ENCODE measurements at regions of chr5 and their contacts with region 1.

Region 1: GRCh38 chr5:55159763-55160492 is at the start of gene GPX8:
- DNase-seq: peak; percentile 88
- H3K4me3 Mint-ChIP-seq: peak within 1 kb of the TSS; percentile 78
- H3K27ac Mint-ChIP-seq: peak within 1 kb of the TSS; percentile 82
- H3K4me1 Mint-ChIP-seq: peaks cover 2% of the 10 kb centered on the region
- H3K27me3 Mint-ChIP-seq: peaks cover 13% of the 10 kb centered on the region
- CTCF ChIP-seq: peak; percentile 66
- total RNA-seq, gene GPX8: 37.2 and 38.8 TPM in 2 replicates

Region 2: GRCh38 chr5:54651482-54652076 is 508.3 kb before region 1 on chr5:
- CTCF ChIA-PET with region 1: no interaction called
- POLR2A ChIA-PET with region 1: no interaction called
- intact Hi-C with region 1: loop called (anchors 10 kb)
- DNase-seq: peak; percentile 96
- H3K4me3 Mint-ChIP-seq: no peak overlapping the region
- H3K27ac Mint-ChIP-seq: peak overlapping the region; percentile 49
- H3K4me1 Mint-ChIP-seq: peaks cover 25% of the 10 kb centered on the region
- H3K27me3 Mint-ChIP-seq: no peaks in the 10 kb centered on the region
- CTCF ChIP-seq: no peak

Region 3: DNA sequence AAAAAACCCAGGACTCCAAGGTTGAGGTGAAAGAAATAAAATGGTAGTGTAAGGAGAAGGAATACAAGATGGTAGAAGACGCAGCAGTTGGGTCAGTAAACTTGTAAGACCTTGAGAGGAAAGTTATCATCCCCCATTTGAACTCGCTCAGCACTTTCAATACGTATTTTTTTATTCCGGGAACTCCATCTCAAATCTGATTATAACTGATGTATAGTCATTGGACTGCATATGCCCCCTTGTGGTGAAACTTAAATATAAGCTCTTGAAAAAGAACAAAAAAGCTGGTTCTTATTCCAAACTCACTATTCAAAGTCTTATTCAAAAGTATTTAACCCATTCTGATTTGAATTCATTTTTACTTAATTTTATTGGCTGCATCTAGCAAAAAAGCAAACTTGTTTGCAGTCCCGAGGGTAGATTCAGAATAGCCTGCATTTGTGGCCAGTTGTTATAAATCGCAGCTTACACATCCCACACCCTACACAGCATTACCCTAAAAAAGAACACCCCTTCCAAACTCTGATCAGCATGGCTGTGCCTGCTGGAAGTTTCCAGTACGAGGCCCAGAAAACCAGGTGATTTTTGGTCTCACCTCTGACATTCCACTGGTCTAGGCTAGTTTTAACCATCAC is 292.5 kb before region 1 on chr5:
- CTCF ChIA-PET with region 1: interaction called, 10 read pairs
- POLR2A ChIA-PET with region 1: no interaction called
- intact Hi-C with region 1: no loop called
- DNase-seq: peak; percentile 57
- H3K4me3 Mint-ChIP-seq: peak overlapping the region; percentile 44
- H3K27ac Mint-ChIP-seq: no peak overlapping the region
- H3K4me1 Mint-ChIP-seq: peaks cover 6% of the 10 kb centered on the region
- H3K27me3 Mint-ChIP-seq: peaks cover 13% of the 10 kb centered on the region
- CTCF ChIP-seq: peak; percentile 49

Region 4: DNA sequence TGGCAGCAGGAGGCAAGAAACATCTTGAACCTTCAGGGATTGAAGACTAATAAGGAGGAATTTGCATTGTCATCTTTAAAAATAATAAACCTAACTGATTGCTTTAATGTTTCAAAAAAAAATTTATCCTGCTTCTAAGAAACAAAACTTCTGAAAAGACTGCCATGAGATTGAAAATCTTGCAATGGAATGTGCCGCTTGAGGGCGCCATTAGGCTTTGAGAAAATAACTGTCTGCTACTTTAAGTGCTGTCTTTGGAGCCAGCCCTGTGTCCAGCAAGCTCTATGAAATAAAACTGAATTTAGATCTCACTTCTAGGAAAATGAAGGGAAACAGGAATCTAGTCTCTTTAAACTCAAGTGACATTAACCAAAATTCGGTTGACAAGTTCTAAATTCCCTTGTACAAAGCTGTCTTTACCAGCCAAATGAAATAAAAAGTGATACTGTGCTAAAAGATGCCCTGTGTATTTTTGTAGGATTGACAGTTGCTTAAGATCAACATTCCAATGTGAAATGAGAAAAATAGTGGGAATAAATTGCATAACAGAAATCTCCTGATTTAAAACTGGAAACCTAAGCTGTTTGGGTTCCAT is 253.9 kb before region 1 on chr5:
- CTCF ChIA-PET with region 1: interaction called, 100 read pairs
- POLR2A ChIA-PET with region 1: interaction called, 31 read pairs
- intact Hi-C with region 1: loop called (anchors 1 kb)
- DNase-seq: peak; percentile 69
- H3K4me3 Mint-ChIP-seq: no peak overlapping the region
- H3K27ac Mint-ChIP-seq: no peak overlapping the region
- H3K4me1 Mint-ChIP-seq: no peaks in the 10 kb centered on the region
- H3K27me3 Mint-ChIP-seq: peaks cover 32% of the 10 kb centered on the region
- CTCF ChIP-seq: peak; percentile 61

Region 5: DNA sequence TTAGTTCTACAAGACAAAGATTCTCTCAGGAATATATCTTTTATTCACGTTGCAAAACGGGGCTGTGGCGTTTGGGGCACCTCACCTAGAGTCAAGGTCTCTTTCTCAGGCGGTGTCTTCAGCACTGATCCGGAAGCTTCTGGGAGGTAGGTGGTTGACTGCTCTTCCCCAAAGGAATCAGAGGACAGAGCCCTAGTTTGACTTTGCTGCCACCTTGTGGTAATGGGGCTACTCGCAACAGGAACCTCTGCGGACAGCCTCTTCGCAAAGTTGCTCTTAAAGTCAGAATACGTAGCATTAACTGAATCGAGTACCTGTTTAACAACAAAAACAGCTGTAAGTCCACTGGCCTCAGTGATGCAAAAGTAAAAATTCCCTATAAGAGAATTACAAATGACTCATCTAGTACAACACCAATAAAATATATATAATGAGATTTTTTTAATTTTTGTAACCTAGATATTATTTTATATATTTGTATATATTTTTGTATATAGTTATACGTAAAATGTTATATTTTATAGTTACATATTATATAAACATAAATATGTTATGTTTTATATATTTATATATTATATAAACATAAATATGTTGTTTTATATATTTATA is 13.3 kb before region 1 on chr5:
- CTCF ChIA-PET with region 1: interaction called, 16 read pairs
- POLR2A ChIA-PET with region 1: interaction called, 13 read pairs
- intact Hi-C with region 1: no loop called
- DNase-seq: peak; percentile 90
- H3K4me3 Mint-ChIP-seq: no peak overlapping the region
- H3K27ac Mint-ChIP-seq: no peak overlapping the region
- H3K4me1 Mint-ChIP-seq: no peaks in the 10 kb centered on the region
- H3K27me3 Mint-ChIP-seq: peaks cover 63% of the 10 kb centered on the region
- CTCF ChIP-seq: peak; percentile 89

Region 6: DNA sequence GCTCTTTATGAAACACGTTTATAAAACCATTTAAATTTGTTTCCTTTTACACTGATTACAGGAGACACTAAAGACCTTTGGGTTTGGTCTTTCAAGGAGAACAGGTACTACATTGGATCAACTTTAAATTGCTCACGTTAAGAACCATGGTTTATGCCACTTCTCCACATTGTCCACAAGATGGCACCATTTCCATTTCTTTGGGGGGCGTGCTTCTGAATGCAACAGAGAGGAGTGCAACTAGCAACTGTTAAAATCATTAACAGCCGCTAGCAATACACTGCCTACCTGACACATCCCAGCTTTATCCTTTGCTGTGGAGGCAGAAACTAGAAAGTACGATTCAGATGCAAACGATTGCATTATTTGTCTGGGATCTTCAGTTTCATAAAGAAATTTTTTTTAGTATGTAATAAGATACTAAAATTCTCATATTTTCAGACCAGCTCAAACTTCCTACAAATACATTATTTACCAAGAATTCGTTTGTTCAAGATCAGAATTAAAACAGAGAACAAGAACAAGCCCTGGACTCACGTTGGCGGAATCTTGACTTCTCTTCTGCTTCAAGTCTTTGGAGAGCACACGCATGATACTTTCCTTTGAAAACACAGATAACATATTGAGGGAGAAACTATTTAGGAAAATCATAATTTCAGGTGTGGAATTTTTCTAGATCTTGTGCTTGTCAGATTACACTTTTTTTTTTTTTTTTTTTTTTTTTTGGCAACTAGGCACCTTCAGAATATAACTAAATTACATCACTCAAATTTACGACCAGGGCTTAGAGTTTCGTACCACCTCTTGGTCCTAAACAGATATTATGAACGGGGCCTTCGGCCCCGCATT is 12.3 kb after region 1 on chr5:
- CTCF ChIA-PET with region 1: interaction called, 23 read pairs
- POLR2A ChIA-PET with region 1: interaction called, 12 read pairs
- intact Hi-C with region 1: no loop called
- DNase-seq: peak; percentile 96
- H3K4me3 Mint-ChIP-seq: peak overlapping the region; percentile 83
- H3K27ac Mint-ChIP-seq: peak overlapping the region; percentile 25
- H3K4me1 Mint-ChIP-seq: peaks cover 16% of the 10 kb centered on the region
- H3K27me3 Mint-ChIP-seq: no peaks in the 10 kb centered on the region
- CTCF ChIP-seq: peak; percentile 69

Region 7: DNA sequence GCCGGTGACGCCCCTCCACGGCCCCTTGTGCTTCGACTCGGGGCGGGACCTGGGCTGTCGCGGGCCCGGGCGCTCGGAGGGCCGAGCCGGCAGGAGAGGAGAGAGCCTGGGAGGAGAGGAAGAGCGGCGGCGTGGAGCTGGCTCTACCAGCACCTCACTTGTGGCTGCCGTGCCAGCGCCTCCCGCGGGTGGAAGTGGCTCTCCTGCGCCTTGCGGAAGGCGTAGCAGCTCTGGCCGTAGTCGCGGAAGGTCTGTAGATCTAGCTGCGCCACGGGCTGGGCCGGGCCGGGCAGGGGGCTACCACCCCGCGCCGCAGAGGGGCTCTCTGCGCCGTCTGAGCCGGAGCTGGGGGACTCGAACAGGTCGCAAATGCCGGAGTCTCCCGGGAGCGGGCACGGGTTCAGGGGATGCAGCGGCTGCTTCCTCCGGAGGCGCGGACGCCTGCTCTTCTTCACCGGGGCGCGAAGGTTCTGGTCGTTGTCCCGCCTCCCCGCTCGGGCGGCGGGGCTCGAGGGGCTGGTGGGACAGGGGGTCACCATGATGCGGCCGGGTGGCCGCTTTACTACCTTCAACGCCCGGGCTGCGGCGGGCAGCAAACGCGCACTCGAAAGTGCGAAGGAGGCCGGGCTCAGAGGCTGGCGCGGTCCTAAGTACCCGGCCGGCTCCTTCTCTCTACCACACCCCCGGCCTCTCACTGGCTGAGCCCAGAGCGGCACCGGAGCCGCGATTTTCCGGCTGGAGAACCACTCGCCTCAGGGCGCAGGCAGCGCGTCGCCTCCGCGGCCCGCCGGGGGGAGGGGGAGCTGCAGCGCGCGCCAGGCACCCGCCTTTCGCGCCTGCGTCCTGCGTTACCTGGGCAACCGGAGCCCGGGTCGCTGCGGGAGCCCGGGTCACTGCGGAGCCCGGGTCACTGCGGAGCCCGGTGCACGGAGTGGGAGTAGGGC is 73.3 kb after region 1 on chr5 and contains the start of gene CCNO:
- CTCF ChIA-PET with region 1: interaction called, 4 read pairs
- POLR2A ChIA-PET with region 1: interaction called, 21 read pairs
- intact Hi-C with region 1: no loop called
- DNase-seq: peak; percentile 89
- H3K4me3 Mint-ChIP-seq: peak within 1 kb of the TSS; percentile 98
- H3K27ac Mint-ChIP-seq: peak within 1 kb of the TSS; percentile 90
- H3K4me1 Mint-ChIP-seq: no peaks in the 10 kb centered on the region
- H3K27me3 Mint-ChIP-seq: no peaks in the 10 kb centered on the region
- CTCF ChIP-seq: peak; percentile 20
- total RNA-seq, gene CCNO: 10.6 and 11.7 TPM in 2 replicates

Region 8: DNA sequence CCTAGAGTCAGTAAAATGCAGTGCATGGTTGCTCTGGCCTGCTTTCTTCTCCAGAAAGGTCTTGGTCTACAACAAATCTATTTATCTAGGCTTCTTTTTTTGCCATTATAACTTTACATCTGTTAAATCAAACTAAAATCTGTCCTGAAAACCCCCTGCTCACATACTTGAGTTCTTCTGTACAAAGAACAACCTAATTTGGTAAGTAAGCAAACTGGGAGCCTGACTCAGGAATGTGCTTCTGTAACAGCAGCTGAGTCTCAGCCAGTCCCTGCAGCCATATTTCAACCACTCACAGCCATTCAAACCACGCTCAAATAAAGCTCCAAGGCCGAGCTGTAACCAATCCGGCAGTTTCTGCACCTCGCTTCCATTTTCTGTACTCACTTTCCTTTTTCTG is 279.1 kb after region 1 on chr5:
- CTCF ChIA-PET with region 1: no interaction called
- POLR2A ChIA-PET with region 1: no interaction called
- intact Hi-C with region 1: no loop called
- DNase-seq: no peak
- H3K4me3 Mint-ChIP-seq: no peak overlapping the region
- H3K27ac Mint-ChIP-seq: peak overlapping the region; percentile 99
- H3K4me1 Mint-ChIP-seq: peaks cover 17% of the 10 kb centered on the region
- H3K27me3 Mint-ChIP-seq: no peaks in the 10 kb centered on the region
- CTCF ChIP-seq: no peak